Psoas muscle (tissue), 8 donors: ENCODE measurements at regions of chr15 and their contacts with region 1.

Region 1: GRCh38 chr15:61834076-61834697 is 226.1 kb downstream of the VPS13C start:
- DNase-seq: peak; percentile 82 to 89
- ATAC-seq: peak; percentile 76 to 91 (median 84)
- H3K4me3 ChIP-seq: no peak overlapping the region
- H3K27ac ChIP-seq: no peak overlapping the region
- H3K4me1 ChIP-seq: no peaks in the 10 kb centered on the region
- H3K27me3 ChIP-seq: no peaks in the 10 kb centered on the region
- CTCF ChIP-seq: peak; percentile 99

Region 2: GRCh38 chr15:60507596-60508424 is 1326.4 kb before region 1 on chr15:
- intact Hi-C with region 1: loop called in 1 of 2 experiments (anchors 10 kb)
- DNase-seq: no peak
- ATAC-seq: peak; percentile 85 to 91 (median 88)
- H3K4me3 ChIP-seq: no peak overlapping the region
- H3K27ac ChIP-seq: peak overlapping the region; percentile 66
- H3K4me1 ChIP-seq: peaks cover 23% of the 10 kb centered on the region
- H3K27me3 ChIP-seq: no peaks in the 10 kb centered on the region
- CTCF ChIP-seq: peak; percentile 97

Region 3: DNA sequence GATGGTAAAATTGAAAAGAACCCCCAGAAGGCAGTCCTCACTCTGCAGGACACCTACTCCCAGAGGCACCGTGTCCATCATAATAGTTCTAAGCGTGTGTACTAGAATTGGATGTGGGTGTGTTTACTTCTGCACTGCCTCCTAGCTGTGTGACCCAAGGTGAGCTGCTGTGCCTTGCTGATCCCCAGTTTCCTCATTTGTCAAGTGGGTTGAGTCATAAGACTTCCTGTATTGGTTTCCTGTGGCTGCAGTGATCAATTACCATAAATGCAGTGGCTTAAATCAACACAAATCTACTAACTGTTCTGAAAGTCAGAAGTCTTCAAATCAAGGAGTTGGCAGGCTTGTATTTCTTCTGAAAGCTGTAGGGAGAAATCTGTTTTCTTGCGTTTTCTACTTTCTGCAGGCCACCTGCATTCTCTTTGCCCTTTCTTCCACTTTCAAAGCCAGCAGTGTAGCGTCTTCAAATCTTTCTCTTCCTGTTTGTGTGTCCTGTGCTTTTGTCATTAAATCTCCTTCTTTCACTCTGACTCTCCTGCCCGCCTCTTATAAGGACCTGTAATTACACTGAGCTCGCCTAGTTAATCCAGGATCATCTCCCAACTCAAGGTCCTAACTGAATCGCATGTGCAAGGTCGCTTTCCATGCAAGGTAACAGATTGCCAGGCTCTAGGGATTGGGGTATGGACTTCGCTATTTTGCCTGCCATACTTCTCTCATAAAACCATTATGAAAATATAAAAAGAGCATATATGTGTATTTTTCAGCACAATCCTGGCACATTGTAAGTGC is 664.1 kb before region 1 on chr15:
- intact Hi-C with region 1: loop called in 1 of 2 experiments (anchors 5 kb)
- DNase-seq: no peak
- ATAC-seq: no peak
- H3K4me3 ChIP-seq: no peak overlapping the region
- H3K27ac ChIP-seq: no peak overlapping the region
- H3K4me1 ChIP-seq: peaks cover 32% of the 10 kb centered on the region
- H3K27me3 ChIP-seq: no peaks in the 10 kb centered on the region
- CTCF ChIP-seq: no peak

Region 4: GRCh38 chr15:61530779-61531178 is 303.4 kb before region 1 on chr15:
- intact Hi-C with region 1: loop called in 1 of 2 experiments (anchors 10 kb)
- DNase-seq: no peak
- ATAC-seq: peak in 1 of 4 donors; percentile 58
- H3K4me3 ChIP-seq: no peak overlapping the region
- H3K27ac ChIP-seq: no peak overlapping the region
- H3K4me1 ChIP-seq: no peaks in the 10 kb centered on the region
- H3K27me3 ChIP-seq: no peaks in the 10 kb centered on the region
- CTCF ChIP-seq: no peak

Region 5: GRCh38 chr15:61702224-61703020 is 131.8 kb before region 1 on chr15:
- intact Hi-C with region 1: loop called (anchors 2 kb)
- DNase-seq: peak; percentile 48 to 85
- ATAC-seq: peak; percentile 90 to 96 (median 94)
- H3K4me3 ChIP-seq: no peak overlapping the region
- H3K27ac ChIP-seq: peak overlapping the region; percentile 66
- H3K4me1 ChIP-seq: peaks cover 14% of the 10 kb centered on the region
- H3K27me3 ChIP-seq: no peaks in the 10 kb centered on the region
- CTCF ChIP-seq: no peak